Caco-2 (cell line): ENCODE measurements at regions of chr20 and their contacts with region 1.

Region 1: GRCh38 chr20:32902456-32903420 is 44.0 kb downstream of the EFCAB8 start:
- DNase-seq: peak; percentile 76 to 80
- H3K4me3 ChIP-seq: no peak overlapping the region
- H3K4me3 Mint-ChIP-seq: no peak overlapping the region
- H3K27ac Mint-ChIP-seq: no peak overlapping the region
- H3K4me1 ChIP-seq: no peaks in the 10 kb centered on the region
- H3K4me1 Mint-ChIP-seq: no peaks in the 10 kb centered on the region
- H3K27me3 ChIP-seq: no peaks in the 10 kb centered on the region
- H3K27me3 Mint-ChIP-seq: no peaks in the 10 kb centered on the region
- CTCF ChIP-seq: peak; percentile 99 to 100

Region 2: GRCh38 chr20:32621071-32621890 is 281.5 kb before region 1 on chr20:
- CTCF ChIA-PET with region 1: interaction called, 10 read pairs
- POLR2A ChIA-PET with region 1: no interaction called
- intact Hi-C with region 1: no loop called
- DNase-seq: peak; percentile 64 to 91
- H3K4me3 ChIP-seq: no peak overlapping the region
- H3K4me3 Mint-ChIP-seq: no peak overlapping the region
- H3K27ac Mint-ChIP-seq: no peak overlapping the region
- H3K4me1 ChIP-seq: no peaks in the 10 kb centered on the region
- H3K4me1 Mint-ChIP-seq: no peaks in the 10 kb centered on the region
- H3K27me3 ChIP-seq: no peaks in the 10 kb centered on the region
- H3K27me3 Mint-ChIP-seq: peaks cover 4% of the 10 kb centered on the region
- CTCF ChIP-seq: no peak

Region 3: DNA sequence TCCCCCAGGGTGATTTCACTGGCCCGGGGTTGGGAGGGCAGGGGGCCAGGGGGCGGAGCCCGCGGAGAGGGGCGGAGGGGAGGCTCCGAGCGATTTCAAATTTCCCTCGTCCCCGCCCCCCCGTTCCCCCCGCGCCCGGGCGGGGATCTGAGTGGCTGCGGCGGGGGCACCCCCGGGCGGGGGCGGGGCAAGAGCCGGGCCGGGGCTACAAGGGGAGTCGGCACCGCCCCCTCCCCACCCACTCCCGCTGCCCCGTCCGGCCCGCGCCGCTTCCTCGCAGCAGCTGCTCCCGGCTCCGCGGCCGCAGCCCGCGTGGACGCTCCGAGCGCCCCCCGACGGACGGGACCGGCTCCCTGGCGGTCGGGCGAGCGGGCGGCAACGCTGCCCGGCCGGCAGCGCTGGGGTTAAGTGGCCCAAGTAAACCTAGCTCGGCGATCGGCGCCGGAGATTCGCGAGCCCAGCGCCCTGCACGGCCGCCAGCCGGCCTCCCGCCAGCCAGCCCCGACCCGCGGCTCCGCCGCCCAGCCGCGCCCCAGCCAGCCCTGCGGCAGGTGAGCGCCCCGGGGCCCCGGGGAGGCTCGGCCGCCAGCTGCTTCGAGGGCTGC is 140.5 kb before region 1 on chr20 and contains the start of gene DNMT3B:
- CTCF ChIA-PET with region 1: no interaction called
- POLR2A ChIA-PET with region 1: no interaction called
- intact Hi-C with region 1: no loop called
- DNase-seq: peak; percentile 97 to 99
- H3K4me3 ChIP-seq: peak within 1 kb of the TSS; percentile 87
- H3K4me3 Mint-ChIP-seq: peak within 1 kb of the TSS; percentile 100
- H3K27ac Mint-ChIP-seq: peak within 1 kb of the TSS; percentile 93
- H3K4me1 ChIP-seq: peaks cover 25% of the 10 kb centered on the region
- H3K4me1 Mint-ChIP-seq: peaks cover 33% of the 10 kb centered on the region
- H3K27me3 ChIP-seq: no peaks in the 10 kb centered on the region
- H3K27me3 Mint-ChIP-seq: no peaks in the 10 kb centered on the region
- CTCF ChIP-seq: peak in 1 of 2 experiments; percentile 31
- total RNA-seq, gene DNMT3B: 95.5 and 105 TPM in 2 replicates

Region 4: DNA sequence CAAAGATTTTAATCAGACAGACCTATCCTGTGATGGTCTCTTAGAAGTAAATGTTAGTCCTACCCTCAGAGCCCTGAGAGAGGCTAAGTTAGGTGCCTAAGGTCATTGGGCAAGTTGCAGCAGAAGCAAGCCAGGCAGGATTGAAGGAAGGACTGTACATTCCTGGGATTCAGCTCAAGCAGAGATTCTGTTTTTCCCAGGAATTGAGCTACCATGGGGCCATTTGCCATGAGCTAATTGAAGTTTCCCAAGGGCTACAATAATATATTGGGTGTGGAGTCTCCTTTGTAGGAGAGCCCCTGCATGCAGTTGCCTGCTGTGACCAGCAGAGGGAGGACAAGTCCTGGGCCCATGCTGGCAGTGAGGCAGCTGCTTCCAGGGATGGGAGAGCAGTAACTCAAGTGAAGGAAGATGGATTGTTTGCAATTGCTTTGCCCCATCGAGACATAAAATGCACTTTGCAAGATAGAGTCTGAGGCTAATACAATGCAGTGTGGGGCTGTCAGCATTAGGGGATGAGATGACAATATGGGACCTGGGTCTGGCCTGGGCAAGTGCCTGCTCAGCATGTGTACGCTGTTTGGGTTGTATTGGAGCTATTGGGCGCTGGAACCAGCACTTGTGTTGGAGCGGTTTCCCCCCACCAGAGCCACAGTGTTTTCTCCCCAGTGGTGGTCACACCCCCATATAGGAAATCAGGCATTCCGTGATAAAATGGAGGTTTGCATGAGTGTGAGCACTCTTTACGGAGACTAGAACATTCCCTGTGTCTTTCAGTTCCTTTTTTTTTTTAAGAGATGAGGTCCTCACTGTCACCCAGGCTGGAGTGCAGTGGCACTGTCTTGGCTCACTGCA is 112.6 kb before region 1 on chr20:
- CTCF ChIA-PET with region 1: no interaction called
- POLR2A ChIA-PET with region 1: no interaction called
- intact Hi-C with region 1: no loop called
- DNase-seq: peak; percentile 88 to 91
- H3K4me3 ChIP-seq: no peak overlapping the region
- H3K4me3 Mint-ChIP-seq: no peak overlapping the region
- H3K27ac Mint-ChIP-seq: no peak overlapping the region
- H3K4me1 ChIP-seq: peaks cover 13% of the 10 kb centered on the region; the same call in 1 of the 2 replicates
- H3K4me1 Mint-ChIP-seq: no peaks in the 10 kb centered on the region
- H3K27me3 ChIP-seq: no peaks in the 10 kb centered on the region
- H3K27me3 Mint-ChIP-seq: no peaks in the 10 kb centered on the region
- CTCF ChIP-seq: peak; percentile 100

Region 5: GRCh38 chr20:32930181-32930580 is 27.4 kb after region 1 on chr20:
- CTCF ChIA-PET with region 1: no interaction called
- POLR2A ChIA-PET with region 1: no interaction called
- intact Hi-C with region 1: no loop called
- DNase-seq: no peak
- H3K4me3 ChIP-seq: no peak overlapping the region
- H3K4me3 Mint-ChIP-seq: no peak overlapping the region
- H3K27ac Mint-ChIP-seq: no peak overlapping the region
- H3K4me1 ChIP-seq: no peaks in the 10 kb centered on the region
- H3K4me1 Mint-ChIP-seq: no peaks in the 10 kb centered on the region
- H3K27me3 ChIP-seq: no peaks in the 10 kb centered on the region
- H3K27me3 Mint-ChIP-seq: peaks cover 9% of the 10 kb centered on the region
- CTCF ChIP-seq: no peak

Region 6: GRCh38 chr20:32945710-32946221 is 43.0 kb after region 1 on chr20:
- CTCF ChIA-PET with region 1: interaction called, 20 read pairs
- POLR2A ChIA-PET with region 1: no interaction called
- intact Hi-C with region 1: loop called (anchors 1 kb)
- DNase-seq: peak in 1 of 2 experiments; percentile 68
- H3K4me3 ChIP-seq: no peak overlapping the region
- H3K4me3 Mint-ChIP-seq: no peak overlapping the region
- H3K27ac Mint-ChIP-seq: no peak overlapping the region
- H3K4me1 ChIP-seq: no peaks in the 10 kb centered on the region
- H3K4me1 Mint-ChIP-seq: no peaks in the 10 kb centered on the region
- H3K27me3 ChIP-seq: no peaks in the 10 kb centered on the region; the same call in 1 of the 2 replicates
- H3K27me3 Mint-ChIP-seq: peaks cover 33% of the 10 kb centered on the region
- CTCF ChIP-seq: peak; percentile 91 to 92

Region 7: DNA sequence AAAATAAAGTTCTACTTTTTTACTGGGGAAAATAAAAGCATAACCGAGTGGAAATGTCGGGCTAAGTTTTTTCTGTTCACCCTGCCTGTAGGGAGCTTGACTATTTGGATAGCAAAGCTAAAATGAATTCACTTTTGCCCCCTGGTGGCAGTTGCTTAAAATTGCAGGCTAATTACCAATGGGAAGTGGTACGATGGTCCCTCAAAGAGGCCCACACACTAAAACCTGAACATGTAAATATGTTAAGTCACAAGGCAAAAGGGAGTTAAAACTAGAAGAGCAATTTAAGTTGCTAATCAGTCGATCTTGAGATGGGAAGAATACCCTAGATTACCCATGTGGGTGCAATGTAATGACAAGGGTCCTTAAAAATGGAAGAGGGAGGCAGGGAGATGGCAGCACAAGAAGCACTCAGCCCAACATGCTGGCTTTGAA is 102.4 kb after region 1 on chr20:
- CTCF ChIA-PET with region 1: no interaction called
- POLR2A ChIA-PET with region 1: no interaction called
- intact Hi-C with region 1: loop called (anchors 10 kb)
- DNase-seq: peak in 1 of 2 experiments; percentile 42
- H3K4me3 ChIP-seq: no peak overlapping the region
- H3K4me3 Mint-ChIP-seq: no peak overlapping the region
- H3K27ac Mint-ChIP-seq: no peak overlapping the region
- H3K4me1 ChIP-seq: no peaks in the 10 kb centered on the region
- H3K4me1 Mint-ChIP-seq: no peaks in the 10 kb centered on the region
- H3K27me3 ChIP-seq: no peaks in the 10 kb centered on the region; the same call in 1 of the 2 replicates
- H3K27me3 Mint-ChIP-seq: peaks cover 18% of the 10 kb centered on the region
- CTCF ChIP-seq: peak; percentile 59 to 84

Region 8: DNA sequence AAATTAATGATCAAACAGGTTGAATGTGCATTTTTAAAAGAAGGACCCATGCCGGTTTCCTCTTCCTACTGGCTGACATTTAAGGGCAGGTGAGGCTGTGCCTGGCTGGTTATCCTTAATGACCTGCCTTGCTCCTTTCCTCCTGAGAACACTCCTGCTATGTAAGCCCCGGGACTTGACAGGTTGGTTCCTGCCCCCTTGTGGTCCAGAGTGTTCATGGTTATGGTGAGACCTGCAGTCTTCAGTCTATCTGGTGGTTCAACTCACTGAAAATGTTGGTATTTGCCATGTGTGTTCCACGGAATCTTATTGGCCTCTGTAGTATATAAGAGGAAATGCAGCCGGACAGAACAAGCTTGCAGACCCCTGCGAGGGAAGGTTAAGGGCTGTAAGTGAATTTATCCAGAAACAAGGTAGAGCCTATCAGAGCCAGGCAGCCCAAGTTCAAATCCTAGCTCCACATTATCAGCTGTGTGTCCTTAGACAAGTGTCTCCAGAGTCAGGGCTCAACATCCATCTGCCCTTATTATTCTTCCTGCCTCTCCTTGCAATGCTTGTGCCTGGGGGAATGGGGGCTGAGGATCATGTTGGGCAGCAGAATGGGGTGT is 309.2 kb after region 1 on chr20:
- CTCF ChIA-PET with region 1: interaction called, 7 read pairs
- POLR2A ChIA-PET with region 1: no interaction called
- intact Hi-C with region 1: loop called (anchors 1 kb)
- DNase-seq: peak; percentile 92 to 93
- H3K4me3 ChIP-seq: no peak overlapping the region
- H3K4me3 Mint-ChIP-seq: no peak overlapping the region
- H3K27ac Mint-ChIP-seq: no peak overlapping the region
- H3K4me1 ChIP-seq: no peaks in the 10 kb centered on the region
- H3K4me1 Mint-ChIP-seq: no peaks in the 10 kb centered on the region
- H3K27me3 ChIP-seq: peaks cover 1% of the 10 kb centered on the region
- H3K27me3 Mint-ChIP-seq: peaks cover 29% of the 10 kb centered on the region
- CTCF ChIP-seq: peak; percentile 87 to 97

Region 9: GRCh38 chr20:33299111-33299603 is 396.4 kb after region 1 on chr20:
- CTCF ChIA-PET with region 1: no interaction called
- POLR2A ChIA-PET with region 1: no interaction called
- intact Hi-C with region 1: loop called (anchors 5 kb)
- DNase-seq: peak; percentile 86 to 93
- H3K4me3 ChIP-seq: no peak overlapping the region
- H3K4me3 Mint-ChIP-seq: no peak overlapping the region
- H3K27ac Mint-ChIP-seq: no peak overlapping the region
- H3K4me1 ChIP-seq: no peaks in the 10 kb centered on the region
- H3K4me1 Mint-ChIP-seq: no peaks in the 10 kb centered on the region
- H3K27me3 ChIP-seq: no peaks in the 10 kb centered on the region; the same call in 1 of the 2 replicates
- H3K27me3 Mint-ChIP-seq: peaks cover 25% of the 10 kb centered on the region
- CTCF ChIP-seq: peak; percentile 100